ENCODE measurements at regions of chr22 and their contacts with region 1.

Region 1: DNA sequence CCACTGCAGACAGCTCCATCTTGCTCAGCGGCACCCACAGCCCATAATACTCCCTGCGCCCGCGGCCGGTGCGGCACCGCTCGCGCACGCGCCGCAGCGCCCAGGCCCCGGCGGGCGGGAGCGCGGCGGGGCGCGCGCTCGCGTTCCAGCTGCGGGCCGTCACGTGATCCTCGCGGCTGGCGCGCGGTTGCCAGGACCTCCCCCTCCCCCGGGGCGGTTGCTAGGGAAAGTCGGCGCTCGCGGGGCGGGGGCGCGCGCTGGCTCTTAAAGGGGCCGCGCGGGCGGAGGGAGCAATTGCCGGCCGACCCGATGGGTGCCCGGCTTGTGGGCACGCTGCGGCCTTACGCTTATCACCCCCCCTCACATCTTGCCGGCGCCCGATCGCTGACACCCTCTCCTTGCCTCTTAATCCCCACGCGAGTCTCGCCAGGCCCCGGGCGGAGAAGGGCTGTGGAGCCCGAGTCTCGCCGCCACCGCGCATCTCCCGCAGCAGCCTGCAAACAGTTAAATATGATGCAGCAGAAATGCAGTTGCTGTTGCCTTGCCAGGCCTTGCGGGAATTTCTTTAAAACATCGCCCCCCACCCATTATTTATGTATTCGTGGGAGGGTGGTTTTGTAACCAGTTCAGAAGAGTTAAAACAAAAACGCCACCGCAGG is at the start of gene CBX6:
- DNase-seq: peak; percentile 95
- CTCF ChIP-seq: no peak

Region 2: GRCh38 chr22:38850941-38851849 is 21.1 kb before region 1 on chr22:
- CTCF ChIA-PET with region 1: interaction called, 30 read pairs
- POLR2A ChIA-PET with region 1: no interaction called
- DNase-seq: no peak
- CTCF ChIP-seq: no peak

Region 3: GRCh38 chr22:38861170-38861876 is 11.0 kb before region 1 on chr22:
- CTCF ChIA-PET with region 1: interaction called, 21 read pairs
- POLR2A ChIA-PET with region 1: no interaction called
- DNase-seq: no peak
- CTCF ChIP-seq: no peak

Region 4: DNA sequence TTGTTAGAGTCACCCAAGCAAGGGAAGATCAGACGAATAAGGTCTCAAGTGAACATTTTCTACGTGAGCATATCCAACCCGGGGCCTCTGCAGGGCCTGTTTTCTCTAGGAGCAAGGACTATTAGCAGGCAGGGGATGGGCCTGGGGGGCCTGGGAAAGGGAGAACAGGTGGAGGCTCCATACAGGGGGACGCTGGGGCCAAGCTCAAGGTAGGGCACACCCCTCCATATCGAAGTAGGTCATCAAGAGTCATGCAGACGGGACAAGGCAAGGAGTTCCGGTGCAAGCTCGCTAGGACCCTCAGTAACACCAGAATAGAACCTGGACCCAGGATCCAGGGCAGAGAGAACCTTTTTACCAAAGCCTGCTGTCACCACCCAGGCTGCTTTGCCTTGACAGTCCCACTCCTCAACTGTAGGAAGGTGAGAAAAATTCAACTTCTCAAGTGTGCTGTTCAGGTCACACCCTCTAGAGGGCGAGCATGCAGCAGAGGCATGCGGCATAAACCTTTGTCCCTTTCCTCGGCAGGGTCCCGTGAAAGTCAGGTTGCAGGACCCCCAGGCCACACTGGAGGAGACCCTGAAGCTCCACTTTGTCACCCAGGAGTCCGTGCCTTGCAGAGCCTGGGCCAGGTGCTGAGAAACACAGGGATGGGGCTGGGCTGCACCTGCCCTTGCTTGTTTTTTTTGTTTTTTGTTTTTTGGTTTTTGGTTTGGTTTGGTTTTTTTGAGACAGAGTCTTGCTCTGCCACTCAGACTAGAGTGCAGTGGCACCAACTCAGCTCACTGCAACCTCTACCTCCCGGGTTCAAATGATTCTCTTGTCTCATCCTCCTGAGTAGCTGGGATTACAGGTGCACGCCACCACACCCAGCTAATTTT is 101.2 kb after region 1 on chr22:
- CTCF ChIA-PET with region 1: interaction called, 12 read pairs
- POLR2A ChIA-PET with region 1: interaction called, 4 read pairs
- DNase-seq: peak; percentile 80
- CTCF ChIP-seq: peak; percentile 94

Region 5: GRCh38 chr22:39097098-39098020 is 225.1 kb after region 1 on chr22 and contains the start of gene APOBEC3H:
- CTCF ChIA-PET with region 1: interaction called, 11 read pairs
- POLR2A ChIA-PET with region 1: no interaction called
- DNase-seq: peak; percentile 55
- CTCF ChIP-seq: no peak

Region 6: DNA sequence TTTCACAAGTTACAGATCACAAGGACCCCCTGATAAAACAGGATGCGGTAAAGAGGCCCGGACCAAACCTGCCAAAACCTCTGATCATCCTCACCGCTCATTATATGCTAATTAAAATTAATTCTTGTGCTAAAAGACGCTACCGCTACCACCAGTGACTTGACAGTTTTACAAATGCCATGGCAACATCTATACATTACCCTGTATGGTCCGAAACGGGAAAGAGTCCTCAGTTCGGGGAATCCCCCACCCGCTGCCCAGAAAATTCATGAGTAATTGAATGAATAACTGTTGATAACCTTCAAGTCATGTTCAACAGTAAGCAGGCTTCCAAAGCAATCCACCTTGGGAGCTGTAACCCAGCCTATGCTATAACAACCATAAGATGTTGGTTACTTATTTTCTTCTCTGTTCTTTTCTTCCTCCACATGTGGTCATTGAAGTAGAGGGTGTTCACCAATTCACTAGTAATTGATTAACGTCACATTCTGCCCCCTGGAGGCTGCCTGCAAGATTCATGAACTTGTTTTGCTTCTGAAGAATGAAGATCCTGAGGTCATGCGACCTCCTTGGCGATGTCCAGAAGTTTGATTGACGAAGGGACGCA is 245.4 kb after region 1 on chr22:
- CTCF ChIA-PET with region 1: interaction called, 10 read pairs
- POLR2A ChIA-PET with region 1: no interaction called
- DNase-seq: peak; percentile 72
- CTCF ChIP-seq: peak; percentile 62